Activated CD8-positive, alpha-beta T cell treated with anti-CD3 and anti-CD28 coated beads for 36 hours (primary cell): ENCODE measurements at regions of chr10 and their contacts with region 1.

Region 1: GRCh38 chr10:16777473-16778370 is 39.5 kb downstream of the RSU1 start:
- DNase-seq: peak; percentile 16
- ATAC-seq: no peak
- H3K4me3 Mint-ChIP-seq: no peak overlapping the region
- H3K27ac Mint-ChIP-seq: peak overlapping the region; percentile 55
- H3K4me1 Mint-ChIP-seq: peaks cover 33% of the 10 kb centered on the region
- H3K27me3 Mint-ChIP-seq: no peaks in the 10 kb centered on the region
- CTCF ChIP-seq: peak; percentile 83

Region 2: DNA sequence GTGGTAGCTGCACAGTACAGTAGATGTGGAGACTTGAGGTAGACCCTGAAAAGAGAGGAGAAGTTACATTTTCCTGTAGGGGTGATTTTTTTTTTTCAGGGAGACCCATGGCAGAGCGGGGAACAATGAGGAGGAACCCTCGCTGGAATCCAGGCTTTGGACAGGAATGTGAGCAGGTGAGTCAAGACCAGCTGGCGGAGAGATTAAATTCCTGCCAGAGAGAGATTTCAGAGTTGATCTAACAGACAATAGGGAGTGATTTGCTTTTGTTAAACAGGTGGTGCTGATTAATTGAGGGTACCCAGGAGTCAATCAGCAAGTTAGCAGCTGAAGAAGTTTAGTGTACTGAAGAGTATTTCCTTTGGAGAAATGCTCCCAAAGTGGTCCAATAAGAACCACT is 875.8 kb before region 1 on chr10:
- CTCF ChIA-PET with region 1: interaction called, 5 read pairs
- POLR2A ChIA-PET with region 1: no interaction called
- intact Hi-C with region 1: loop called (anchors 5 kb)
- DNase-seq: no peak
- ATAC-seq: no peak
- H3K4me3 Mint-ChIP-seq: no peak overlapping the region
- H3K27ac Mint-ChIP-seq: no peak overlapping the region
- H3K4me1 Mint-ChIP-seq: no peaks in the 10 kb centered on the region
- H3K27me3 Mint-ChIP-seq: peaks cover 19% of the 10 kb centered on the region
- CTCF ChIP-seq: no peak

Region 3: DNA sequence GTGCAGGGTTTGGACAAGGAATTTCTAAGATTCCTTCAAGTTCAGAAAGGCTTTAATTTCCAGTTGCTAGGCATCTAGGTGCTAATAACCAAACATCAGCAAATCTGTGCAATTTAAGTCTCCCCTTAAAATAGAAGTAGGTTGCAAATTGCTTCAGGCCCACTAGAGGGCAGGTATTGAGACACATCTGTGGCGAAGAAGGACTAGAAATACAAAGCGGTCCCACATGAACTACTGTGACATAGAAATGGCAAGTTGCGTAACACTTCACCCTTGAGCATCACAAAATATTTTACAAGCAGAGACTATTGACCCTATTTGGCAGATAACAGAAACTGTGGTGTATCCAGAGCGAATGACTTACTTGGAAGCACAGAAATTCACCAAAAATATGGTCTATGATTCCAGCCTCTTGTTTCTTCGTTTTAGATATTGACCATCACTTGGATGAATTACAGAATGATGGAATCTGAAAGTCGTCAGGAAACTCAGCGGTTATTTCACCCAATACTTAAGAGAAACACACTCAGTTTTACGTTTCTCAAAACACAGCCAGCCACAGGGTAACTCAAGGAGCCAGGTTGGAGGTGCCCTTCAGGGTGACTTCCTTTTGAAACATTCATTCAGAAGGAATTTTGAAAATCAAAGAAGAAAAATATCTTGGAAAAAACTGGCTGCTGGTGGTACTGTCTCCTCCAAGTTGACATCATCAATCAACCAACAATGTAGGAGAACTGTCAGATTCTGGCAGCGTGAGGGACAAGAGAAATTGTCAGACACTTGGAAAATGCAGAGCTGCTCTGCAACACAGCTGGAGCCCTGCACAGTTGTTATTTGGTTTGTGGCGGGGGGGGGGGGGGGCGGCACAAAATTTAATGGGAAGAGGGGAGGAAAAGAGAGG is 661.1 kb before region 1 on chr10:
- CTCF ChIA-PET with region 1: interaction called, 3 read pairs
- POLR2A ChIA-PET with region 1: no interaction called
- intact Hi-C with region 1: loop called (anchors 10 kb)
- DNase-seq: peak; percentile 13
- ATAC-seq: no peak
- H3K4me3 Mint-ChIP-seq: no peak overlapping the region
- H3K27ac Mint-ChIP-seq: no peak overlapping the region
- H3K4me1 Mint-ChIP-seq: no peaks in the 10 kb centered on the region
- H3K27me3 Mint-ChIP-seq: peaks cover 1% of the 10 kb centered on the region
- CTCF ChIP-seq: peak; percentile 50

Region 4: GRCh38 chr10:16520900-16521299 is 256.8 kb before region 1 on chr10:
- CTCF ChIA-PET with region 1: no interaction called
- POLR2A ChIA-PET with region 1: no interaction called
- intact Hi-C with region 1: loop called (anchors 10 kb)
- DNase-seq: peak; percentile 59
- ATAC-seq: peak; percentile 70
- H3K4me3 Mint-ChIP-seq: peak overlapping the region; percentile 58
- H3K27ac Mint-ChIP-seq: no peak overlapping the region
- H3K4me1 Mint-ChIP-seq: peaks cover 2% of the 10 kb centered on the region
- H3K27me3 Mint-ChIP-seq: peaks cover 41% of the 10 kb centered on the region
- CTCF ChIP-seq: peak; percentile 24